Mammary epithelial cell (primary cell): ENCODE measurements at regions of chr6 and their contacts with region 1.

Region 1: GRCh38 chr6:99520855-99521632 is 5.8 kb upstream of the USP45 start:
- DNase-seq: peak; percentile 78
- H3K4me3 ChIP-seq: peak overlapping the region; percentile 81 to 94 (median 83)
- H3K27ac ChIP-seq: peak overlapping the region; percentile 80
- H3K4me1 ChIP-seq: peaks cover 9% of the 10 kb centered on the region
- H3K27me3 ChIP-seq: no peaks in the 10 kb centered on the region
- CTCF ChIP-seq: peak; percentile 61 to 84

Region 2: GRCh38 chr6:98469141-98469540 is 1051.9 kb before region 1 on chr6:
- CTCF ChIA-PET with region 1: no interaction called
- dilution Hi-C with region 1: no loop called
- in situ Hi-C with region 1: no loop called
- intact Hi-C with region 1: no loop called
- DNase-seq: no peak
- H3K4me3 ChIP-seq: no peak overlapping the region
- H3K27ac ChIP-seq: no peak overlapping the region
- H3K4me1 ChIP-seq: no peaks in the 10 kb centered on the region
- H3K27me3 ChIP-seq: no peaks in the 10 kb centered on the region
- CTCF ChIP-seq: no peak

Region 3: DNA sequence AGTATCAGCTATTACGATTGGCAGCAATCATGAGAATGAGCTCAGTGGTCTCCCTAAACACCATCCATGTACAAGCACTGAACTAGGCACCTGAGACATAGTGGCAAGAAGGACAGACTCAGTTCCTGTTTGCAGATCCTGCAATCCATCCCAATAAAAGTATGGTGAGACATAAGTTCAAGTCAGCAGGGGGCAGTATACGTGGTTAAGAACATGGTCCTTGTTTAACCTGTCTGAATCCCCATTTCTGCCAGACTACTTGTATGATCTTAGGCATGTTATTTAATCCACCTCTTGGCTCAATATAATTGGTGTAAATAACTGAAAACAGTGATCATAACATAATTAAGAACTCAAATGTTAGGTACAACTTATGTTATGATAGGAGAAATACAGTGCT is 62.7 kb before region 1 on chr6:
- CTCF ChIA-PET with region 1: no interaction called
- dilution Hi-C with region 1: no loop called
- in situ Hi-C with region 1: no loop called
- intact Hi-C with region 1: no loop called
- DNase-seq: peak; percentile 12
- H3K4me3 ChIP-seq: no peak overlapping the region
- H3K27ac ChIP-seq: no peak overlapping the region
- H3K4me1 ChIP-seq: no peaks in the 10 kb centered on the region
- H3K27me3 ChIP-seq: no peaks in the 10 kb centered on the region
- CTCF ChIP-seq: peak; percentile 27 to 32

Region 4: DNA sequence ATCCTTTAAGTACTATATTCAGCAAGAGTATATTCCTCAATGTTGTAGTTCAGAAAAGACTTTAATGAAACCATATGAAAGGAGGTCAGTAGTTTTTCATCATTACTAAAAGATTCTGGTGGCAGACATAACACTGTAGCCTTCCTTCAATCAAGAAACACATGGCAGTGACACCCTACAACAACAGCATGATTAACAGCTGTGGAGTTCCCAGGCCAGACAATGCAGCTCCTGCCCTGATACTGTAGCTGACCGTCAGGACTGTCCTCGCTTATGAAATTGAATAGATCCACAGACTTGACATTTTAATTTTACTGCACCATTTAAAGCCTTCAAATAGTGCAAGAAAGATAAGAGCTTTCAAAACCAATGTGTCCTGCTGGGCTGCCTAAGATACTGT is 49.4 kb before region 1 on chr6:
- CTCF ChIA-PET with region 1: no interaction called
- dilution Hi-C with region 1: no loop called
- in situ Hi-C with region 1: no loop called
- intact Hi-C with region 1: no loop called
- DNase-seq: no peak
- H3K4me3 ChIP-seq: no peak overlapping the region
- H3K27ac ChIP-seq: no peak overlapping the region
- H3K4me1 ChIP-seq: no peaks in the 10 kb centered on the region
- H3K27me3 ChIP-seq: no peaks in the 10 kb centered on the region
- CTCF ChIP-seq: no peak

Region 5: GRCh38 chr6:99568103-99568933 is 47.3 kb after region 1 on chr6 and contains the start of gene CCNC:
- CTCF ChIA-PET with region 1: no interaction called
- dilution Hi-C with region 1: no loop called
- in situ Hi-C with region 1: no loop called
- intact Hi-C with region 1: loop called (anchors 5 kb)
- DNase-seq: peak; percentile 95
- H3K4me3 ChIP-seq: peak within 1 kb of the TSS; percentile 73 to 92 (median 80)
- H3K27ac ChIP-seq: peak within 1 kb of the TSS; percentile 88
- H3K4me1 ChIP-seq: peaks cover 4% of the 10 kb centered on the region
- H3K27me3 ChIP-seq: no peaks in the 10 kb centered on the region
- CTCF ChIP-seq: no peak
- total RNA-seq, gene CCNC: 79.3 to 130 TPM

Region 6: GRCh38 chr6:99822741-99823512 is 301.9 kb after region 1 on chr6:
- CTCF ChIA-PET with region 1: no interaction called
- dilution Hi-C with region 1: no loop called
- in situ Hi-C with region 1: no loop called
- intact Hi-C with region 1: loop called (anchors 5 kb)
- DNase-seq: peak; percentile 69
- H3K4me3 ChIP-seq: peak overlapping the region in 2 of 3 experiments; percentile 17 to 30
- H3K27ac ChIP-seq: no peak overlapping the region
- H3K4me1 ChIP-seq: peaks cover 9% of the 10 kb centered on the region
- H3K27me3 ChIP-seq: no peaks in the 10 kb centered on the region
- CTCF ChIP-seq: peak; percentile 66 to 75